ENCODE measurements at regions of chr1 and their contacts with region 1.

Region 1: DNA sequence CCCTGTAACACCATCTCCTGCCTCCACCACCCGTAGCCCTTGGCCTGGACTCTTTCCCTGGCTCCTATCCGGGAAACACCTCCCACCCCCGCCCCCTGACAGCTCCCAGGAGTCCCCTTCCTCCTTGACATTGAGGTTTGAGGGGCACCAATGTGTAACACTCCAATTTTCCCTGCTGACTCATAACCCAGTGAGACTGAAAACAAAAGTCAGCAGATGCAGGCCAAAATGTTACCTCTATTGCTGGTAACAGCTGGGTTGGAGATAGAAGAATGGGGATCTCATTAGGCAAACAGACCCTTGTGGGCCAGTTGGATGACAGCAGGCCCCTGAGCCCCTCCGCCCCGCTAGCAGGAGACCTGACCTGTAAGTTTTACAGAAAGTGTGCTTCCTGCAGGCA is 237.2 kb downstream of the KAZN start:
- DNase-seq: no peak
- H3K4me3 ChIP-seq: no peak overlapping the region
- H3K27ac ChIP-seq: no peak overlapping the region
- H3K4me1 ChIP-seq: no peaks in the 10 kb centered on the region
- H3K27me3 ChIP-seq: no peaks in the 10 kb centered on the region
- CTCF ChIP-seq: no peak

Region 2: DNA sequence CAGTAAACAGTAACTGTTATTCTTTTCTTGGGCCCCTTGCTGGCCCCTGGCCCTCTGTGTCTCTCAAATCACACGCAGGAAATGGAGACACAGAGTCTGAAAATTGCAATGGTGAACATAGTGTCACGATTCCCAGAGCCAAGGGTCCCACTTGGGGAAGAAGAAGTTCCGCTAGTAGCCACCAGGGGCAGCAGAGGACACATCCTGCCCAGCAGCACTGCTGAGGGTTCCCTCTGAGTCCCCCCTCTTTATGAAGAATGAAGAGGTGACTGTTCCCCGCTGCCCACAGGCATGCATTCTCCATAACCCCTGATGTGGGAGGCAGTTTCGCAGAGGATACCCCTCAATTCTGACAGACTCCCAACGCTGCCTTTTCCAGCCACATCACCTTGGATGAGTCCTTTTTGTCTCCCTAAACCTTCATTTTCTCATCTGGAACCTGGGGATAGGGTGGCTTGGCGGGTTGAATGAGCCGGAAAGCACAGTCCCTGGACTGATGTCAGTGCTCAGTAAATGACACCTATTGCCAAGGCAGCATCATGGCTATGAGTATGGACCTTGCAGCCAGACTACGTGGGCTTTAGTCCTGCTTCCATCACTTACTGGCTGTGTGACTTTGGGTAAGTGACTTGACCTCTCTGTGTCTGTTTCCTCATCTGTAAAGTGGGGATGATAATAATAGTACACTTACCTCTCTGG is 79.8 kb after region 1 on chr1:
- CTCF ChIA-PET with region 1: no interaction called
- POLR2A ChIA-PET with region 1: no interaction called
- intact Hi-C with region 1: no loop called
- DNase-seq: peak; percentile 66
- H3K4me3 ChIP-seq: no peak overlapping the region
- H3K27ac ChIP-seq: no peak overlapping the region
- H3K4me1 ChIP-seq: no peaks in the 10 kb centered on the region
- H3K27me3 ChIP-seq: no peaks in the 10 kb centered on the region
- CTCF ChIP-seq: peak; percentile 86

Region 3: GRCh38 chr1:15370781-15371520 is 535.2 kb after region 1 on chr1:
- CTCF ChIA-PET with region 1: interaction called, 10 read pairs
- POLR2A ChIA-PET with region 1: no interaction called
- intact Hi-C with region 1: no loop called
- DNase-seq: no peak
- H3K4me3 ChIP-seq: no peak overlapping the region
- H3K27ac ChIP-seq: no peak overlapping the region
- H3K4me1 ChIP-seq: no peaks in the 10 kb centered on the region
- H3K27me3 ChIP-seq: no peaks in the 10 kb centered on the region
- CTCF ChIP-seq: no peak

Region 4: DNA sequence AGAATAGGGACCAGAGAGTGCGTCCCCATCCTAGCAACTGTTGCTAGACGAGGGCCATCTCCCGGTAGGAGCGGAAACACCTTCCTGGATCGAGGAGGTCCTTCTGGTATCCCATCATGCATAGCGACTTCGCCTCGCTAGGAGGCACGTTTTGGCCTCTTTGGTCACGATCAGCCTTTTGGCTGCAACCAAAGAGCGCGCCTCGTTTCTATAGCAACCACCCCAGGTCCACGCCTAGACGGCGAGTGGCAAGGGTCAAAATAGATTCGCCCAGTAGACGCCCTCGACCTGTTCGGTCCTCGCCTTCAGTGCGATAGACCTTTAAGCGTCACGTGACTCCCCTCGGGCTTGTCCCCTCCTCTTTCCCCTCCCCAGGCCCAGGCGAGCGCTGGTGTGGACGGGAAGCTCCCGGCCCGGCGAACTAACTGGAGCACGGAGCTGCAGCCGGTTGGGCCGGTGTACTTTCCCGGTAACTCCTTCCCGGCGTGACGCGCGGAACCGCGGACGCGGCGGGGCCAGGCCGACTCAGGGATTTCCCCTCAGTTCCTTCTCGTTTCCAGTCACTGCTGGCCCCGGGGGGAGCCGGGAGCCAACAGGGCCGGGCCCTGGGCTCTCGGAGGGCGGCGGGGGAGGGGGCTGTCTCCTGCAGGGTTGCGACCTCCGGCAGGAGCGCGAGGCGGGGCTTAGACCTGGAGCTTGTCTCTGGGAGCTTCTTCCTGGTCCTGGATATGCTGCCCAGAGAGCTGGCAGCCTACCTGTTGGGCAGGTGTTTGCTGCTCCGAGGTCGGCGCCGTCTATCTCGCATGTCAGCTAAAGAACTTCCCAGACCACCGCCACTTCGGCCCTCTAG is 691.0 kb after region 1 on chr1 and contains the start of gene DNAJC16:
- CTCF ChIA-PET with region 1: no interaction called
- POLR2A ChIA-PET with region 1: no interaction called
- intact Hi-C with region 1: no loop called
- DNase-seq: peak; percentile 100
- H3K4me3 ChIP-seq: peak within 1 kb of the TSS; percentile 93
- H3K27ac ChIP-seq: peak within 1 kb of the TSS; percentile 83
- H3K4me1 ChIP-seq: peaks cover 14% of the 10 kb centered on the region
- H3K27me3 ChIP-seq: no peaks in the 10 kb centered on the region
- CTCF ChIP-seq: peak; percentile 31; the same call in 1 of the 2 replicates
- total RNA-seq, gene DNAJC16: 17.1 and 18.6 TPM in 2 replicates

Region 5: DNA sequence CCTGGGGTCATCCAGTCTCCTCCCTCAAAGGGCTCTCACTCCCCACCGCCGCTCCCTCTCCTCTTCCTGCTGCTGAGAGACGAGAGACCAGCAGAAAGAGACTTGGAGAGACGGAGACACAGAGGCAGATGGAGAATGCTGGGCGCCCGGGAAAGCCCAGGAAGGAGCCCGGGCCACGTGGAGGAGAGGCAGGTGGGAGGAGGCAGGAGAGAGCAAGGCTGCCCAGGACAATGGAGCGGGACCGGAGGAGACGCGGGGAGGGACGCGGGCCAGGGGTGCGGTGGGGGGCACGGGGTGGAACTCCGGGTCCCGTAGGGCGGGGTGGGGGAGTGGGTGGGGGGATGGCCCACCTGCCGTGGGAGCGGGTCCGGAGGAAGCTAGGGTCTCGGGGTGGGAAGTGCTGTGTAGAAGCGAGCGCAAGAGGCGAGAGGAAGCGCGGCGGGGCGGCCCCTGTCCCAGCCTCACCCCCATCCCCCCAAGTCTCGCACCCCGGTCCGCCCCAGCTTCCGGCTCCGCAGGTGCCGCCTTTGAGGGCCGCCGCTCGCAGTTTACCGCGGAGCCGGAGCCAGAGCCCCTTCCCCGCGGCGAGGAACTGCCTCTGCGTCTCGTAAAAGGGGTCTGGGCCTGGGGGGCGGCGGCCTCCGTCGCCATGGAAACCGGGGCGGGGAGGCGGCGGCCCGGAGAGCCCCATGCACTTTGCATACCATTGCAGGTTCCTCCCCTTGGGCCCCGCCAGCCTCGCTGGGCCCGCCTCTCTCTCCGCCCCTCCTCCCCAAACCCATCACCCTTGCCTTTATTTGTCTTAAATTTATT is 1331.8 kb after region 1 on chr1:
- CTCF ChIA-PET with region 1: no interaction called
- POLR2A ChIA-PET with region 1: no interaction called
- intact Hi-C with region 1: no loop called
- DNase-seq: peak; percentile 85
- H3K4me3 ChIP-seq: peak overlapping the region; percentile 56
- H3K27ac ChIP-seq: peak overlapping the region; percentile 60
- H3K4me1 ChIP-seq: peaks cover 20% of the 10 kb centered on the region
- H3K27me3 ChIP-seq: no peaks in the 10 kb centered on the region
- CTCF ChIP-seq: no peak

Measured in A673 (cell line).